Ovary (tissue), 10 donors: ENCODE measurements at regions of chr18 and their contacts with region 1.

Region 1: DNA sequence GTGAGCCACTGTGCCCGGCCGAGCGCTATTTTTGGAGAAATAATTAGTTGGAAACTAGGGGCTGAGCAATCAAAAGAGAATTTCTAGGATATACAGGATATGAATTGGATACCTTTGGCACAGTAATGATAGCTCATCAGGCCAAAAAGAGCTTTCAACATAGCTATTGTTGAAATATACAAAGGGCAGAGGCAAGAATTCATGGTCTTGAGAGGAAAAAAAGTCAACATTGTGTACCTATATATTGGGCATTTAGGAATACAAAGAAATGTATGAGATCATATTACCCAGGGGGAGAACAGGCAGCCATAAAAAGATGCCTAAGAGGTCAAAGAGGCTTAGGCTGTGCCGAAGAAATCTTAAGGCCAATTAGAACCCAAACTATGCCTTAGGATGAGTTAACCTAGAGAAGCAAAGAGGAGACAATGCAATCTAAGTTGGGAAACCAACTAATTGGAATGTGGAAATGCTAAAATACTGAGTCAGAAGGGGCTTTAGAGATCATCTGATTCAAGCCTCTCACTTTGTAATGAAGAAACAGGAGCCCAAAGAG is 99.0 kb downstream of the RBBP8 start:
- DNase-seq: no peak
- H3K4me3 ChIP-seq: no peak overlapping the region
- H3K27ac ChIP-seq: no peak overlapping the region
- H3K4me1 ChIP-seq: no peaks in the 10 kb centered on the region
- H3K27me3 ChIP-seq: no peaks in the 10 kb centered on the region
- CTCF ChIP-seq: no peak
- EP300 ChIP-seq: no peak
- POLR2A ChIP-seq: no peak

Region 2: DNA sequence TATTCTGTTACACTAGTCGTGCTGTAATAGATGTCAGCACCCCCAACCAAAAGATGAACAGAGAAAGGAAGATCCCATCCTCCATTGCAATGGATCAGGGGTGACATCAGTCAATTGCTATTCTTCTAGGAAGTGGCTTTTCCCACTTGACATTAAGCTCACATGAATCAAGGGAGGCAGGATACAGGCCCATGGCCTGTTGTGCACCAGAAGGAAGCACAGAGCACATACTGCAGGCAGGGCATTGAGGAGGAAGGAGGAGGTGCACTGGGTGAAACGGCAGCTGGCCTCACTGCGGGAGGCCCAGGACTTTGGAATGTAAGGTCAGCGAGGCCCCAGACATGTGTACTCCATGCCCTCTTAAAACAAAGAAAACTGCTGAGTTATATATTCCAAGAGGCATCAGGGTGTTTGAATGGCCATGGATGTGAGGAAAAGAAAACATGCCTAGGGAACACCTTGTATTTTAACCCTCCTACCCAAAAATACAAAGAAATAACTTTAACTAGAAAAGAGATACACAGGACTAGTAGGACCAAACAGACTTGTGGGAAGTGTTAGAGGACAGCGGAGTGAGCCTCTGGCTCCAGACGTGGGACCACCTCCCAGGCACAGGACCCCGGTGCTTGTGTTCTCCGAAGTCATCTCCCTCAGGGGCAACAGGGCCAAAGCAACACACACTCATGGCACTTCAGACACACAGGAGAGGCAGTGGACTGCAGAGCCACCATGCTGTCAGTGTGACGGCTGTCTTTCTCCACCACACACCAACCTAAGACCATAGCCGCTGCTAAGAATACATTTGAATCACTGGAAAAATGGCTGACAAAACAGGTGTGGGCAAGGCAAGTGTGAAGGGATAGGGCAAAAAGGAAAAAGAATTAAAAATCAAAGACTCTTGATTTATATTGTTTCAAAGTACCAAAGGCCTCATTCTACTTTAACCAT is 369.6 kb after region 1 on chr18:
- intact Hi-C with region 1: loop called in 1 of 4 experiments (anchors 10 kb)
- DNase-seq: peak in 4 of 5 donors; percentile 25 to 68 (median 28)
- H3K4me3 ChIP-seq: no peak overlapping the region
- H3K27ac ChIP-seq: no peak overlapping the region
- H3K4me1 ChIP-seq: peaks cover 8% of the 10 kb centered on the region
- H3K27me3 ChIP-seq: no peaks in the 10 kb centered on the region
- CTCF ChIP-seq: no peak
- EP300 ChIP-seq: no peak
- POLR2A ChIP-seq: no peak